Activated CD4-positive, alpha-beta memory T cell treated with anti-CD3 and anti-CD28 coated beads for 36 hours (primary cell): ENCODE measurements at regions of chr12 and their contacts with region 1.

Region 1: GRCh38 chr12:132710422-132711168 is at the start of gene PGAM5:
- DNase-seq: peak; percentile 93
- H3K4me3 Mint-ChIP-seq: peak within 1 kb of the TSS; percentile 83
- H3K27ac Mint-ChIP-seq: peak within 1 kb of the TSS; percentile 86
- H3K4me1 Mint-ChIP-seq: peaks cover 23% of the 10 kb centered on the region
- H3K27me3 Mint-ChIP-seq: no peaks in the 10 kb centered on the region
- total RNA-seq, gene PGAM5: 54.3 to 56.4 TPM

Region 2: GRCh38 chr12:132687208-132688164 is 23.1 kb before region 1 on chr12 and contains the starts of genes POLE and PXMP2:
- CTCF ChIA-PET with region 1: no interaction called
- POLR2A ChIA-PET with region 1: interaction called, 5 read pairs
- intact Hi-C with region 1: loop called (anchors 1 kb)
- DNase-seq: peak; percentile 96
- H3K4me3 Mint-ChIP-seq: peak within 1 kb of the TSS; percentile 77
- H3K27ac Mint-ChIP-seq: peak within 1 kb of the TSS; percentile 38
- H3K4me1 Mint-ChIP-seq: peaks cover 18% of the 10 kb centered on the region
- H3K27me3 Mint-ChIP-seq: no peaks in the 10 kb centered on the region
- total RNA-seq, gene POLE: 112 to 114 TPM
- total RNA-seq, gene PXMP2: 17.8 to 20.9 TPM

Region 3: DNA sequence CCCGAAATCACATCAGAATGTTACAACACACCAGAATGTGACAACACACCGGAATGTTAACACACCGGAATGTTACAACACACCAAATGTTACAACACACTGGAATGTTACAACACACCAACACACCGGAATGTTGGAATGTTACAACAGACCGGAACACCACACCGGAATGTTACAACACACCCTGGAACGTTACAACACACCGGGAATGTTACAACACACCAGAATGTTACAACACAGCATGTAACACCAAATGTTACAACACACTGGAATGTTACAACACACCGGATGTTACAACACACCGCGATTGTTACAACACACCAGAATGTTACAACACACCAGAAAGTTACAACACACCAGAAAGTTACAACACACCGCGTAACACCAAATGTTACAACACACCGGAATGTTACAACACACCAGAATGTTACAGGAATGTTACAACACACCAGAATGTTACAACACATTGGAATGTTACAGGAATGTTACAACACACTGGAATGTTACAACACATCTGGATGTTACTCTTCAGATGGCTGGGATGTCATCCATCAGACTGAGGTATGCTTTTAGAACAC is 155.7 kb after region 1 on chr12:
- CTCF ChIA-PET with region 1: no interaction called
- POLR2A ChIA-PET with region 1: no interaction called
- intact Hi-C with region 1: no loop called
- DNase-seq: no peak
- H3K4me3 Mint-ChIP-seq: no peak overlapping the region
- H3K27ac Mint-ChIP-seq: no peak overlapping the region
- H3K4me1 Mint-ChIP-seq: peaks cover 10% of the 10 kb centered on the region
- H3K27me3 Mint-ChIP-seq: no peaks in the 10 kb centered on the region